GM12878 (cell line): ENCODE measurements at regions of chr14 and their contacts with region 1.

Region 1: GRCh38 chr14:93629643-93630042 is 158.6 kb downstream of the PRIMA1 start:
- DNase-seq: no peak
- ATAC-seq: no peak
- H3K4me3 ChIP-seq: no peak overlapping the region
- H3K27ac ChIP-seq: no peak overlapping the region
- H3K4me1 ChIP-seq: no peaks in the 10 kb centered on the region
- H3K27me3 ChIP-seq: no peaks in the 10 kb centered on the region; a peak in 1 of 4 replicates
- CTCF ChIP-seq: no peak
- EP300 ChIP-seq: no peak
- POLR2A ChIP-seq: no peak
- RAD21 ChIP-seq: no peak

Region 2: GRCh38 chr14:92830902-92831301 is 798.7 kb before region 1 on chr14:
- CTCF ChIA-PET with region 1: no interaction called
- POLR2A ChIA-PET with region 1: interaction called, 10 read pairs
- RAD21 ChIA-PET with region 1: no interaction called
- SMC1A ChIA-PET with region 1: no interaction called
- in situ Hi-C with region 1: no loop called
- intact Hi-C with region 1: no loop called
- DNase-seq: no peak
- ATAC-seq: no peak
- H3K4me3 ChIP-seq: no peak overlapping the region
- H3K27ac ChIP-seq: no peak overlapping the region
- H3K4me1 ChIP-seq: no peaks in the 10 kb centered on the region
- H3K27me3 ChIP-seq: no peaks in the 10 kb centered on the region
- CTCF ChIP-seq: no peak
- EP300 ChIP-seq: no peak
- POLR2A ChIP-seq: no peak
- RAD21 ChIP-seq: no peak